Right cardiac atrium (tissue), 5 donors: ENCODE measurements at regions of chr1 and their contacts with region 1.

Region 1: GRCh38 chr1:44652445-44653106 is 21.7 kb downstream of the TMEM53 start:
- DNase-seq: peak; percentile 78 to 93 (median 91)
- ATAC-seq: peak; percentile 72 to 83
- H3K4me3 ChIP-seq: no peak overlapping the region
- H3K27ac ChIP-seq: no peak overlapping the region
- H3K4me1 ChIP-seq: no peaks in the 10 kb centered on the region
- H3K27me3 ChIP-seq: no peaks in the 10 kb centered on the region

Region 2: GRCh38 chr1:44568135-44568900 is 84.3 kb before region 1 on chr1:
- intact Hi-C with region 1: no loop called
- DNase-seq: no peak
- ATAC-seq: no peak
- H3K4me3 ChIP-seq: no peak overlapping the region
- H3K27ac ChIP-seq: no peak overlapping the region
- H3K4me1 ChIP-seq: no peaks in the 10 kb centered on the region
- H3K27me3 ChIP-seq: no peaks in the 10 kb centered on the region

Region 3: DNA sequence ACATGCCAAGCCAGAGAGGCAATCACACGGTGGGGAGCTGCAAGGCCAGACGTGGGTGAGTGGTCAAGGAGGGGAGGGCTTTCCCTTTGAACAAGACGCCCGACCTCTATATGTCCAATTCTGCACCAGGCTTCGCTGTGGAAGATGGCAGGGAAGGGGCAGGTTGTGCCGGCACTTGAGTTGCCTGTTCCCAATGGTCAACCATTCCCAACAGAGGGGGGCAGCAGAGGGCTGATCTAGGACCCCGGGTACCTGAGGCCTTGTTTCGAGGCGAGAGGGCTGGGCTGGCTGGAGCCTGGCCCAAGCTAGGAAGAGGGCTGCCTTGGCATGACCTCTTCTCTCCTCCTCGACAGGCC is 43.2 kb before region 1 on chr1:
- intact Hi-C with region 1: loop called (anchors 2 to 5 kb)
- DNase-seq: peak; percentile 38 to 84 (median 74)
- ATAC-seq: peak; percentile 73 to 79
- H3K4me3 ChIP-seq: no peak overlapping the region
- H3K27ac ChIP-seq: no peak overlapping the region
- H3K4me1 ChIP-seq: no peaks in the 10 kb centered on the region
- H3K27me3 ChIP-seq: no peaks in the 10 kb centered on the region